CD4-positive, alpha-beta T cell (primary cell): ENCODE measurements at regions of chr4 and their contacts with region 1.

Region 1: GRCh38 chr4:153497988-153498967 is 32.1 kb downstream of the TMEM131L start:
- DNase-seq: peak in 3 of 14 experiments; percentile 43 to 52 (median 45)
- ATAC-seq: peak; percentile 32
- H3K4me3 ChIP-seq: peak overlapping the region; percentile 32
- H3K4me3 Mint-ChIP-seq: peak overlapping the region; percentile 84
- H3K27ac ChIP-seq: peak overlapping the region; percentile 82 to 90
- H3K27ac Mint-ChIP-seq: peak overlapping the region; percentile 92
- H3K4me1 ChIP-seq: peaks cover 85% of the 10 kb centered on the region
- H3K4me1 Mint-ChIP-seq: peaks cover 97% of the 10 kb centered on the region
- H3K27me3 ChIP-seq: no peaks in the 10 kb centered on the region
- H3K27me3 Mint-ChIP-seq: no peaks in the 10 kb centered on the region
- CTCF ChIP-seq: no peak

Region 2: GRCh38 chr4:153362184-153362583 is 136.1 kb before region 1 on chr4:
- CTCF ChIA-PET with region 1: no interaction called
- POLR2A ChIA-PET with region 1: no interaction called
- intact Hi-C with region 1: no loop called
- DNase-seq: no peak
- ATAC-seq: no peak
- H3K4me3 ChIP-seq: no peak overlapping the region
- H3K4me3 Mint-ChIP-seq: no peak overlapping the region
- H3K27ac ChIP-seq: no peak overlapping the region
- H3K27ac Mint-ChIP-seq: no peak overlapping the region
- H3K4me1 ChIP-seq: no peaks in the 10 kb centered on the region
- H3K4me1 Mint-ChIP-seq: peaks cover 5% of the 10 kb centered on the region
- H3K27me3 ChIP-seq: no peaks in the 10 kb centered on the region
- H3K27me3 Mint-ChIP-seq: no peaks in the 10 kb centered on the region
- CTCF ChIP-seq: no peak

Region 3: GRCh38 chr4:153432968-153433753 is 65.1 kb before region 1 on chr4:
- CTCF ChIA-PET with region 1: interaction called, 10 read pairs
- POLR2A ChIA-PET with region 1: interaction called, 5 read pairs
- intact Hi-C with region 1: no loop called
- DNase-seq: peak; percentile 40 to 90 (median 52)
- ATAC-seq: peak; percentile 69
- H3K4me3 ChIP-seq: peak overlapping the region; percentile 54
- H3K4me3 Mint-ChIP-seq: peak overlapping the region; percentile 83
- H3K27ac ChIP-seq: peak overlapping the region; percentile 25 to 59
- H3K27ac Mint-ChIP-seq: peak overlapping the region; percentile 91
- H3K4me1 ChIP-seq: peaks cover 42% of the 10 kb centered on the region
- H3K4me1 Mint-ChIP-seq: peaks cover 73% of the 10 kb centered on the region
- H3K27me3 ChIP-seq: no peaks in the 10 kb centered on the region
- H3K27me3 Mint-ChIP-seq: no peaks in the 10 kb centered on the region
- CTCF ChIP-seq: peak; percentile 79

Region 4: DNA sequence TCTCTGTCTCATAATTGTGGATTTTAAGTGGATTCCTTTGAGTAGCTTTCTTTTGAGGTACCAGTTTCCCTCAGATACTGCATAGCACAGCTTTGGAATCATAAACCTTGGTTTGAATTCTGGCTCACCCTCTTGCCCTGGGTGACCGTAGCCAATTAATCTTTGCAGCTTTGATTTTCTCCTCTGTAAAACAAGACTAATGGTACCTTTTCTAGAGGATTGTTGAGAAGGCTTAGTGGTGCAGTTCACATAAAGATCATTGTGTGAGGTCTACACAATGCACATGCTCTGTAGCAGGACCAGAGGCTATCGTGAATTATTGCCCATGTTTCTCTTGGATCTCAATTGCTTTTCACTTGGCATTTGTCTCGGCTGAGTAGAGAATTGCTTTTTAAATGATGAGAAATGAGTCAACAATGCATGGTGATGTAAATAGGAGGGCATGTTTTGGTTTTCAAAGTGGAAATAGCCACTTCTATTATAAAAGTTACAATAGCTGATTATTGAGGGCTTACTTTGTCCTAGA is 15.8 kb after region 1 on chr4:
- CTCF ChIA-PET with region 1: interaction called, 5 read pairs
- POLR2A ChIA-PET with region 1: interaction called, 21 read pairs
- intact Hi-C with region 1: loop called in 1 of 2 experiments (anchors 2 kb)
- DNase-seq: no peak
- ATAC-seq: no peak
- H3K4me3 ChIP-seq: no peak overlapping the region
- H3K4me3 Mint-ChIP-seq: peak overlapping the region; percentile 25
- H3K27ac ChIP-seq: no peak overlapping the region
- H3K27ac Mint-ChIP-seq: peak overlapping the region; percentile 64
- H3K4me1 ChIP-seq: peaks cover 40% of the 10 kb centered on the region
- H3K4me1 Mint-ChIP-seq: peaks cover 83% of the 10 kb centered on the region
- H3K27me3 ChIP-seq: no peaks in the 10 kb centered on the region
- H3K27me3 Mint-ChIP-seq: no peaks in the 10 kb centered on the region
- CTCF ChIP-seq: no peak

Region 5: GRCh38 chr4:153528705-153529485 is 30.6 kb after region 1 on chr4:
- CTCF ChIA-PET with region 1: interaction called, 3 read pairs
- POLR2A ChIA-PET with region 1: interaction called, 79 read pairs
- intact Hi-C with region 1: no loop called
- DNase-seq: peak in 1 of 14 experiments; percentile 30
- ATAC-seq: peak; percentile 21
- H3K4me3 ChIP-seq: peak overlapping the region; percentile 37
- H3K4me3 Mint-ChIP-seq: peak overlapping the region; percentile 75
- H3K27ac ChIP-seq: peak overlapping the region; percentile 39 to 69
- H3K27ac Mint-ChIP-seq: peak overlapping the region; percentile 91
- H3K4me1 ChIP-seq: peaks cover 83% of the 10 kb centered on the region
- H3K4me1 Mint-ChIP-seq: peaks cover 92% of the 10 kb centered on the region
- H3K27me3 ChIP-seq: no peaks in the 10 kb centered on the region
- H3K27me3 Mint-ChIP-seq: no peaks in the 10 kb centered on the region
- CTCF ChIP-seq: no peak

Region 6: GRCh38 chr4:153573881-153574802 is 75.9 kb after region 1 on chr4:
- CTCF ChIA-PET with region 1: interaction called, 5 read pairs
- POLR2A ChIA-PET with region 1: interaction called, 18 read pairs
- intact Hi-C with region 1: no loop called
- DNase-seq: peak; percentile 47 to 83 (median 65)
- ATAC-seq: peak; percentile 97
- H3K4me3 ChIP-seq: no peak overlapping the region
- H3K4me3 Mint-ChIP-seq: peak overlapping the region; percentile 25
- H3K27ac ChIP-seq: peak overlapping the region; percentile 1 to 32
- H3K27ac Mint-ChIP-seq: peak overlapping the region; percentile 57
- H3K4me1 ChIP-seq: peaks cover 37% of the 10 kb centered on the region
- H3K4me1 Mint-ChIP-seq: peaks cover 85% of the 10 kb centered on the region
- H3K27me3 ChIP-seq: no peaks in the 10 kb centered on the region
- H3K27me3 Mint-ChIP-seq: no peaks in the 10 kb centered on the region
- CTCF ChIP-seq: peak; percentile 78

Region 7: DNA sequence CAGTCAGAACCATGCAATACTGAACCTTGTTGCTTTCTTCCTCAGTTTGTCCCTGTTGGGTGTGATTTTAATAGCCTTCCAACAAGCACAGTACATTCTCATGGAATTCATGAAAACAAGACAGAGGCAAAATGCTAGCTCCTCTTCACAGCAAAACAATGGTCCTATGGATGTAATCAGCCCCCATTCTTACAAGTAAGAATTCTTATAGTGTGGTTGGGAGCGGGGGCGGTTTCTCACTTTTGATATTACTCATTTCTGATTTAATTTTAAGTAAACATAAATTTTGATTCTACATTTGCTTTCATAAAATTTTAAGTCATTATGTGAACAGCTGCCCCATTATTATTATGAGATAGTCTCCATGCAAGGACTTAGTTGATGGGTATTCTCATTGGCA is 105.0 kb after region 1 on chr4:
- CTCF ChIA-PET with region 1: no interaction called
- POLR2A ChIA-PET with region 1: no interaction called
- intact Hi-C with region 1: no loop called
- DNase-seq: no peak
- ATAC-seq: no peak
- H3K4me3 ChIP-seq: no peak overlapping the region
- H3K4me3 Mint-ChIP-seq: no peak overlapping the region
- H3K27ac ChIP-seq: no peak overlapping the region
- H3K27ac Mint-ChIP-seq: no peak overlapping the region
- H3K4me1 ChIP-seq: no peaks in the 10 kb centered on the region
- H3K4me1 Mint-ChIP-seq: peaks cover 15% of the 10 kb centered on the region
- H3K27me3 ChIP-seq: no peaks in the 10 kb centered on the region
- H3K27me3 Mint-ChIP-seq: no peaks in the 10 kb centered on the region
- CTCF ChIP-seq: no peak